ENCODE measurements at regions of chr2 and their contacts with region 1.

Region 1: GRCh38 chr2:36785179-36785795 is 88.8 kb downstream of the VIT start:
- DNase-seq: peak; percentile 73
- H3K4me3 ChIP-seq: no peak overlapping the region
- H3K27ac ChIP-seq: no peak overlapping the region
- H3K4me1 ChIP-seq: peaks cover 0 to 6% (median 3%) of the 10 kb centered on the region in 4 donors
- H3K27me3 ChIP-seq: no peaks in the 10 kb centered on the region
- CTCF ChIP-seq: peak; percentile 87 to 98 (median 94)
- EP300 ChIP-seq: no peak
- POLR2A ChIP-seq: no peak

Region 2: GRCh38 chr2:37005118-37005868 is 220.0 kb after region 1 on chr2:
- in situ Hi-C with region 1: loop called in 3 of 4 experiments (anchors 10 to 25 kb)
- intact Hi-C with region 1: no loop called
- DNase-seq: peak; percentile 21
- H3K4me3 ChIP-seq: no peak overlapping the region
- H3K27ac ChIP-seq: peak overlapping the region in 1 of 4 donors; percentile 10
- H3K4me1 ChIP-seq: peaks cover 0 to 15% (median 6%) of the 10 kb centered on the region in 4 donors
- H3K27me3 ChIP-seq: no peaks in the 10 kb centered on the region
- CTCF ChIP-seq: peak; percentile 46 to 64 (median 59)
- EP300 ChIP-seq: no peak
- POLR2A ChIP-seq: no peak

Region 3: DNA sequence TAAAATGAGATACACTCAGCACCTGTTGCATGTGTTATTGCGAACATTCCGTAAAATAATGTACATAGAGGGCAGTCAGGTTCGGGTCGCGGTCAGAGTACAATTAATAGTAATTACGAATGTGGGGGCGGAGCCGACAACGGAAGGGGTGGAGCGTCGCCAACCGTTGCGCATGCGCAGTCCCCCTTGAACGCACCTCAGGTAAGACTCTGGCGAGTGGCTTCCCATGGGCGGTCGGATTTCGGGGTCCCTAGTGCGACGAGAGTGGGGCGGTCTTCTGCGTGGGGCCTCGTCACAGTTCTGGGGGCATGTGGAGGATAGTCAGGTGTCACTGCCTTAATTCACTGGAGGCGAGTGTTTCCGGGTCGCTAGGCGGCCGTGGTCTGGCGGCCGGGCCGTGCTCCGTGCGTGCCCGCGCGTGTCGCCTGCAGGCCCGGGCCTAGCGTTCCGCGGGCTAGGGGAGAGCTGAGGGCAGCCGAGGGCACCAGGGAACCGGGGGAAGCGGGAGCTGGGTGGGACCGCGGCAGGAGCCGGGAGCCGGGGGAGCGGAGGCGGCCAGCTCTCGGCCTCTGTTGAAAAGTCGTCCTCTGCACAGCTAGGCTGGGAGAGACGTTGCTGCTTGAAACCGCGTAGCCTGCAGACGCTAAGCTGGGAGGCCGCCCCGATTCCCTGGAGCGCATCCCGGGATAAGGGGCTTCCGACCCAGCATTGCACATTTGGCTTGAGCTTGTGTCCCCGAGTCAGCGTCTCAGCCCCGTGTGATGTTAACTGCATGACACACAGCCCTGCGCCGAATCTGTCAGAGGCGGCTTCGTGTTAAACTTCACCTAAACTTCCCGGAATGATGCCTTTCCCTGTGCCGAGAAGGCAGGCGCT is 411.3 kb after region 1 on chr2 and contains the start of gene CEBPZOS:
- in situ Hi-C with region 1: no loop called
- intact Hi-C with region 1: no loop called
- DNase-seq: peak; percentile 90
- H3K4me3 ChIP-seq: peak within 1 kb of the TSS; percentile 60 to 80 (median 66)
- H3K27ac ChIP-seq: peak within 1 kb of the TSS; percentile 85 to 89 (median 88)
- H3K4me1 ChIP-seq: peaks cover 6 to 23% (median 13%) of the 10 kb centered on the region in 4 donors
- H3K27me3 ChIP-seq: no peaks in the 10 kb centered on the region
- CTCF ChIP-seq: peak in 1 of 5 experiments; percentile 9
- EP300 ChIP-seq: no peak
- POLR2A ChIP-seq: peak; percentile 86
- total RNA-seq, gene CEBPZOS: 7.5 to 39.0 (median 24.2) TPM

Measured in transverse colon (tissue), 4 donors.